MCF 10A (cell line): ENCODE measurements at regions of chr1 and their contacts with region 1.

Region 1: DNA sequence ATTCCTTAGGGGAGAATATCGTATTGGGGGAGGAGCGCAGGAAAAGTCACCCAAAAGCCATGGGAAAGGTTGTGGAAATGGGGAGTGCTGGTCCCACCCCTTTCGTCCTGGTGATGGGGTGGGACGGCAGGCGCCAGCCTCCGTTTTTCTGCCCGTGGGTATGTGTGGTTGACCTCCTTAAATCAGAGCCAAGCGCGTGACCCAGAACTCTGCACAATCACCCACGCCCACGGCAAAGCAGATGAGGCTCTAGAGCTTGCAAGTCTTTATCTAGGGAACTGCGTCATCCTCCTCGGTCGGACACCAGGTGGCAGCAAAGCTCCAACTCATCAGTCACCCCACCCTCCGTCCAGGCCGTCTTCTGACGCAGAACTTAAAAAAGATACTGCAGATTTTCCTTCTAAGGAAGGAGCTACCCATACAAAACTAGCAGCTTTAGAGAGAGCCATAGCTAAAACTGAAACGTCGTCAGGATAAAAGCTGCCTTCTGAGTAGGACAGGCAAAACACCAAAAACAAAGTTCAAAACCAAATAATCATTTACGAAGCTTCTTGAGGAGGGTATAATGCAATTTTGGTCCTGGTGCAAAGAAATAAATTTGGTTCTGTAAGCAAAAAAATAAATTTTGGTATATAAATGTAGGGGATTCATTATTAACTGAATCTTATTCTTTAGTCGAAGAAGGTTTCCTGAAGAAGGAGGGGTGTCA is 62.0 kb downstream of the TBX19 start:
- DNase-seq: peak; percentile 86
- H3K4me3 Mint-ChIP-seq: peak overlapping the region; percentile 37
- H3K27ac Mint-ChIP-seq: no peak overlapping the region
- H3K4me1 Mint-ChIP-seq: peaks cover 18% of the 10 kb centered on the region
- H3K27me3 Mint-ChIP-seq: no peaks in the 10 kb centered on the region
- CTCF ChIP-seq: peak; percentile 88

Region 2: DNA sequence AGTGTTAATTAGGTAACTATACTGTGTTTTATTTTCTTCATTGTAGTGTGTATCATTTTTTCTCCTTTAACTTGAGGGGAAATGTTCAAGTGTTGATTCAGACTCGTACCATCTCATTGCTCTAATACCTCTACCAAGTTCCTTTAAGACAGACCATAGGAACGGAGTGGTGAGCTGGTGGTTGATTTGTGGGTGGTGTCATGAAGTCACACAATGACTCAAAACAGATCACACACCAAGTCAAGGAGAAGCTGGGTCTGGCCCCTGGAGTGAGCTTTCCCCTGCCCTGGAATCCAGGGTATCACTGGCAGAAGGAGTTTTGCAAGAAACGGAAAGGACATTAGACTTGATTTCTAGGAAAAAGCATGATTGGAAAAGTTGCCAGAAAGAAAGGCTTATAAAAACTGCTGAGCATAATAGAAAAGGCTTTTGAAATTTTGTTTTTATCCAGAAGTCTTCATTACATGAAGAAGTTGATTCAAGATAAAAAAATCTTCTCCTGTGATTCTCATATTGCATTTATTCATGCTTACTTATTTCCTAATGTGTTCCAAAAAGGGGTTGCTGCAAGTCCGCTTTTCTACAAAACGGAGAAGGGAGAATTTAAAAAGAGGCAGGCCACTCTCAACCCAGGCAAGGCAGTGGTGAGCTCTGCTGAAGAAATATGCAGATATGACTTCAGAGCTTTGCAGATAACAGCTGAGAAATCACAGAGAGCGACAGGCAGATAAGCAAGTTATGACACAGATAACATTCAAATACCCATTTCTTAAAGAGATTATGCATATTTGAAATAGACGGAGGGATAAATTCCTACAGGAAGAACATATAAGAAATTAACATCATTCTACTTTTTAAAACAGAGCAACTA is 17.7 kb after region 1 on chr1:
- CTCF ChIA-PET with region 1: interaction called, 25 read pairs
- POLR2A ChIA-PET with region 1: interaction called, 4 read pairs
- intact Hi-C with region 1: no loop called
- DNase-seq: no peak
- H3K4me3 Mint-ChIP-seq: no peak overlapping the region
- H3K27ac Mint-ChIP-seq: no peak overlapping the region
- H3K4me1 Mint-ChIP-seq: no peaks in the 10 kb centered on the region
- H3K27me3 Mint-ChIP-seq: peaks cover 11% of the 10 kb centered on the region
- CTCF ChIP-seq: no peak

Region 3: GRCh38 chr1:168396940-168397698 is 54.4 kb after region 1 on chr1:
- CTCF ChIA-PET with region 1: interaction called, 63 read pairs
- POLR2A ChIA-PET with region 1: no interaction called
- intact Hi-C with region 1: no loop called
- DNase-seq: peak; percentile 30
- H3K4me3 Mint-ChIP-seq: no peak overlapping the region
- H3K27ac Mint-ChIP-seq: no peak overlapping the region
- H3K4me1 Mint-ChIP-seq: peaks cover 18% of the 10 kb centered on the region
- H3K27me3 Mint-ChIP-seq: peaks cover 36% of the 10 kb centered on the region
- CTCF ChIP-seq: no peak

Region 4: DNA sequence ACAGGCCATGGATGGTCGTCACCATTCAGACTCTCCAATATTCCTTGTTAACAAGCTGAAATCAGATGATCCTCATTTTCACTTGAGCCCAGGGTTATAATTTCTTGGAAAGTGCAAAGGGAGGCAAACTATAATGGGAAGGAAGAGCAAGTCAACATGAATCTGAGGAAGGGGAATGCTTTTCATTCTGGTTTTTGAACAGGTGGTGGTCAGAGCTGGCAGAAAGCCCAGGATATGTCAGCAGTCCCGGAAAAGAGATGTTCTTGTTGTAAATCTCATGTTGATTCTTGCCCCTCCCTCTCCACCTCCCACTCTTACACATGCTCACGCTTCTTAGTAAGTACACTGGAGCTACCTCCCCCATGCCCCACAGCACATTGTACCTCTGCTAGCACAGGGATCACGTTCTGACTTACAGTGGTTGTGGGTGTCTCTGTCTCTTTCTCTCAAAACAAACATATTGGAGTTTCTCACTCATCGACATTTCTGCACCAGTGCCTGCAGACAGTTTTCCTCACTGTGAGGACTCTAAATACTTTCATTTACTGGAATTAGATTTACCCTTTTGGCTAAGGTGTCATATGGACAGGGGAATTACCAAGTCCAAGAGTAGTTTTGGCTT is 123.5 kb after region 1 on chr1:
- CTCF ChIA-PET with region 1: interaction called, 13 read pairs
- POLR2A ChIA-PET with region 1: no interaction called
- intact Hi-C with region 1: no loop called
- DNase-seq: peak; percentile 80
- H3K4me3 Mint-ChIP-seq: no peak overlapping the region
- H3K27ac Mint-ChIP-seq: peak overlapping the region; percentile 3
- H3K4me1 Mint-ChIP-seq: peaks cover 47% of the 10 kb centered on the region
- H3K27me3 Mint-ChIP-seq: no peaks in the 10 kb centered on the region
- CTCF ChIP-seq: no peak

Region 5: DNA sequence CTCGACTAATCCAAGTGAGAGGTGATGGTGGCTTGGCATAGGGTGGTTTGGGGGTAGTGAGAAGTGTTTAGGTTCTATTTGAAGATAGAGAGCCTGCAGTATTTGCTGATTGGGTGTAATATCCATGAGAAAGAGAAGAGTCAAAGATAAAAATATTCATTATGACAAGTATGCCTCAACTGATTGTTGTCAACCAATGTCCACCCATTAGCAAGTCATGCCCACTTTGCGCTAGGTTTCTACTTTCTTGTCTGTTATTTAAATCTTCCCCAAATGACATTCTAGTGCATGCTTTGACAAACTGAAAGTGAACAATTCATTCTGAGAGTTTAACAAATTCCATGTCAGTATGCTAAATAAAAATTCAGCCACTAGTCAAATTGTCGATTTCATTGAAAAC is 229.9 kb after region 1 on chr1:
- CTCF ChIA-PET with region 1: interaction called, 99 read pairs
- POLR2A ChIA-PET with region 1: interaction called, 4 read pairs
- intact Hi-C with region 1: loop called (anchors 1 kb)
- DNase-seq: no peak
- H3K4me3 Mint-ChIP-seq: no peak overlapping the region
- H3K27ac Mint-ChIP-seq: no peak overlapping the region
- H3K4me1 Mint-ChIP-seq: no peaks in the 10 kb centered on the region
- H3K27me3 Mint-ChIP-seq: peaks cover 26% of the 10 kb centered on the region
- CTCF ChIP-seq: no peak

Region 6: GRCh38 chr1:168637350-168637991 is 294.7 kb after region 1 on chr1:
- CTCF ChIA-PET with region 1: interaction called, 18 read pairs
- POLR2A ChIA-PET with region 1: no interaction called
- intact Hi-C with region 1: no loop called
- DNase-seq: peak; percentile 64
- H3K4me3 Mint-ChIP-seq: peak overlapping the region; percentile 38
- H3K27ac Mint-ChIP-seq: peak overlapping the region; percentile 84
- H3K4me1 Mint-ChIP-seq: peaks cover 25% of the 10 kb centered on the region
- H3K27me3 Mint-ChIP-seq: no peaks in the 10 kb centered on the region
- CTCF ChIP-seq: peak; percentile 86

Region 7: GRCh38 chr1:168726281-168726680 is 383.6 kb after region 1 on chr1:
- CTCF ChIA-PET with region 1: no interaction called
- POLR2A ChIA-PET with region 1: no interaction called
- intact Hi-C with region 1: no loop called
- DNase-seq: no peak
- H3K4me3 Mint-ChIP-seq: no peak overlapping the region
- H3K27ac Mint-ChIP-seq: no peak overlapping the region
- H3K4me1 Mint-ChIP-seq: peaks cover 16% of the 10 kb centered on the region
- H3K27me3 Mint-ChIP-seq: no peaks in the 10 kb centered on the region
- CTCF ChIP-seq: no peak